HEK293 (cell line): ENCODE measurements at regions of chr11 and their contacts with region 1.

Region 1: DNA sequence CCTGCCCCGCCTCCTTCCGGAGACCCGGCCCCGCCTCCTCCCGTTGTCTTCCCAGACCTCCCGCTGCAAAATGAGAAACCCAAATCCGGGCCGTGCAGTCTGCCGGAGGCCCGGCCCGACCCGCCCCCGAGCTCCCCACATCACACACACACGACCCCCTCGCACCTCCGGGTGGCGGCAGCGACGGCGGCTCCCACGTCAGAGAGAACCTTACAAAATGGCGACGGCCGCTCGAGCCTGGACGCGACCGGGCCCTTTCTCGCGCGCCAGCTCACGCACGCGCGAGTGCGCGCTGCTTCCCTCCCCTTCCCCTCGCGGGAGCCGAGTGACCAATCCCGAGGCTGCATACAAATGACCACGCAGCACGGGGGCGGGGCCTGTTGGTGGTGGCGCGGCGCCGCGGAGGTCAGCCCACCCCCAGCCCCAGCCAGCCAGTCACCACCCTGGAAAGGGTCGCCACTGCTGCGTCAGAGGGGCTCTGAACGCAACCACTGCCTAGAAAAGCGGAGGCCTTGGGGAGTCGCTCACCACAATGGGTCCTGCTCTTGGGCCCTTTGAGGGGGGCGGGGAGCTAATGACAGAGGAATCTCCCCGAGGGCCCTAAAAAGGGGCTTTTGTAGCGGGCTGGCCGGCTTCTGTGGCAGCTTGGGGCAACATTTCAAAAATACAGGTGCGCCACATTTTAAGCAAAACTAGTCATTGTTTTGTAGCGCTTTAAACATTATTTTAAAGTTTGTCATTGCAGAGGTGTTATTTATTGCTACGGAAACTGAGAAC is at the start of gene RBM4B:
- H3K4me3 ChIP-seq: peak within 1 kb of the TSS; percentile 76
- H3K27ac ChIP-seq: peak within 1 kb of the TSS; percentile 72
- H3K4me1 ChIP-seq: no peaks in the 10 kb centered on the region
- CTCF ChIP-seq: no peak

Region 2: GRCh38 chr11:66408488-66409214 is 269.1 kb before region 1 on chr11:
- CTCF ChIA-PET with region 1: interaction called, 31 read pairs
- POLR2A ChIA-PET with region 1: interaction called, 4 read pairs
- H3K4me3 ChIP-seq: peak overlapping the region; percentile 22
- H3K27ac ChIP-seq: no peak overlapping the region
- H3K4me1 ChIP-seq: no peaks in the 10 kb centered on the region
- CTCF ChIP-seq: peak; percentile 96

Region 3: DNA sequence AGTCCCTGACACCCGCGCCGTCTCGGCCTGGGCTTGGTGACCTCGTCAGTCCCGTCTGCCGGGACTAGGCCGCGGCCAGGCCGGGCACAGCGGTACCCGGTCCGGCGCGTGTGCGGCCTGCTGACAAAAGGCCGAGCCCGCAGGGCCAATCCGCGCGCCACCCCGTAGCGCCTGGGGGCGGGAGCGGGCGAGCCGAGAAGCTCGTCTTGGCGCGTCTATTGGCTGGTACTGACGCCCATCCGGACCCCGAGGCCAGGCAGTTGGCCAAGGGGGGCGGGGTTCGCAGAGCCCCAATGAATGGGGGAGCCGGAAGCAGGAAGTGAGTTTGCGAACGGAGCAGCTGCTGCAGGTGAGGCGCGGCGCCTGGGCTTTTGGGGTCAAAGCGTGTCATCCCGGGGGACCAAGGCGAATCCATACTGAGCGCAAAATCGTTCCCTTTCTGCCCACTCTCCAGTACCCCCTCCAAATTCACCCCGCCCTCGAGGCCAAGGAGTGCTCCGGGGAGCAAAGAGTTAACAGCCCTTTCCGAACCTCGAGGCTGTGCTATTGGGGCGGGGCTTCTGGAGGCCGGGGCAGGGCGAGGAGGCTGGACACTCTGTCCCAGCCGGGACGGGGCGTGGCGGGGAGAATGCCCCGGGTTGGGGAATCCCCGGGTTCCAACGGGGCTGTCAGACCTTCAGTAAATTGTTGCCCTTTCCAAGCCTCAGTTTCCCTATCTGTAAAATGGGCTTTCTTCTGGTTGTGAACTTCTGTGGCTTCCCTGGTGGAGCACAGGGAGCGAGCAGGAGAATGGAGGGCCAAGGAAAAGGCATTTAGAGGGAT is 197.5 kb before region 1 on chr11 and contains the start of gene DPP3:
- CTCF ChIA-PET with region 1: interaction called, 9 read pairs
- POLR2A ChIA-PET with region 1: interaction called, 24 read pairs
- H3K4me3 ChIP-seq: peak within 1 kb of the TSS; percentile 73
- H3K27ac ChIP-seq: peak within 1 kb of the TSS; percentile 77
- H3K4me1 ChIP-seq: no peaks in the 10 kb centered on the region
- CTCF ChIP-seq: no peak

Region 4: DNA sequence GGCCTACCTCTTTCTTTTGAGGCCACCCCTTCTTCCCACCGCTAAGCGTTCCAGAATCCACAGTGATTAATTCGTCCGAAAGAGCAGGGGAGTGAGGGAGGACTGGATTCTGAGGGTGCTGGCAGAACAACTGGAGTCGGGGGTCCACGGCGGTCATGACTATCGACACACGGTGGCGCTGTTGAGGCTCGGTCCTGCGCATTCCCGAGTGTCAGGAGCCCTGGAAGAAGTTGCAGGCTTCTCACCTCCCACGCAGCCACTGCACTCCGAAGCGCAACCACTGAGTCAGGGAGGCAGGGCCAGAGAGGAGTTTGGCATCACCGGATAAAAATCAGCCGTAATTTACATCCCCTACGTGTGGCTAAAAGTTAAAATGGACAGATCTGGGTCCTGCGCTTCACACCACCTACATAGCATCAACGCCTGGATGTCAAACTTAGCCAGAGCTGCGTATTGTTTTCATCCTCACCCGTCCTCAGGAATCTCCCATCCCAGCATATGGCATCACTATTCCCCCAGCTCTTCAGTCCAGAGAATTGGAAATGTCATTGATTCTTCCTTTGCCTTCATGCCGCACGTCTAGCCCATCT is 98.7 kb before region 1 on chr11:
- CTCF ChIA-PET with region 1: interaction called, 81 read pairs
- POLR2A ChIA-PET with region 1: interaction called, 8 read pairs
- H3K4me3 ChIP-seq: no peak overlapping the region
- H3K27ac ChIP-seq: no peak overlapping the region
- H3K4me1 ChIP-seq: no peaks in the 10 kb centered on the region
- CTCF ChIP-seq: peak; percentile 65; the same call in 1 of the 2 replicates

Region 5: GRCh38 chr11:66616379-66617154 is 61.2 kb before region 1 on chr11 and contains the start of gene RBM14:
- CTCF ChIA-PET with region 1: interaction called, 5 read pairs
- POLR2A ChIA-PET with region 1: interaction called, 32 read pairs
- H3K4me3 ChIP-seq: peak within 1 kb of the TSS; percentile 75
- H3K27ac ChIP-seq: peak within 1 kb of the TSS; percentile 95
- H3K4me1 ChIP-seq: 0 out of 2 replicates have a peak, but pooled peaks cover 3% of the 10 kb centered on the region
- CTCF ChIP-seq: no peak

Region 6: DNA sequence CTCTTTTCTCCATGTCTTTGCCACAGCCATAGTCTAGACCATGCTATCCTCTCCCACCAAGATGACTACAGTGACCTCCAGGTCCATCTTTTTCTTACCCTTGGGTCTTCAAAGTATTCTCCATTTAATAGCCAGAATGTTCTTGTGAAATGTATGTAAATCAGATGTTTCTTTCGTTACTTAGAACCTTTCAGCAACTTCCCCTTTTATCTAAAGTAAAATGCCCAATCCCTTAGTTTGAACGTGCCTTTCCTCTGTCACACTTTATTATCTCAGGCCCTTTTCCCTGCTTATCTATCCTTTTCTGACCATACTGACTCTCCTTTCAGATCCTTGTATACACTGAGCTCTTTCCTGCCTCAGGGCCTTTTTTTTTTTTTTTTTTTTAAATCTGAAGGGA is 18.0 kb before region 1 on chr11:
- CTCF ChIA-PET with region 1: interaction called, 5 read pairs
- POLR2A ChIA-PET with region 1: interaction called, 14 read pairs
- H3K4me3 ChIP-seq: no peak overlapping the region
- H3K27ac ChIP-seq: no peak overlapping the region
- H3K4me1 ChIP-seq: no peaks in the 10 kb centered on the region
- CTCF ChIP-seq: no peak